Activated T-helper 1 cell treated with anti-CD3 and anti-CD28 coated beads, Interleukin-12 subunit alpha, Interleukin-12 subunit beta, Interleukin-2, Interleukin-4 antibody, amounts not matched to agents 30 ng/mL and 10 ng/mL and 1 ng/mL, durations not matched to agents 14 hours and 24 hours and 36 hours (primary cell): ENCODE measurements at regions of chr1 and their contacts with region 1.

Region 1: GRCh38 chr1:24502709-24503058 is at the start of gene RCAN3:
- DNase-seq: peak; percentile 91
- H3K4me3 Mint-ChIP-seq: peak within 1 kb of the TSS; percentile 97
- H3K27ac Mint-ChIP-seq: peak within 1 kb of the TSS; percentile 94
- H3K4me1 Mint-ChIP-seq: peaks cover 64% of the 10 kb centered on the region
- H3K27me3 Mint-ChIP-seq: no peaks in the 10 kb centered on the region
- total RNA-seq, gene RCAN3: 26.5 and 26.8 TPM in 2 replicates

Region 2: DNA sequence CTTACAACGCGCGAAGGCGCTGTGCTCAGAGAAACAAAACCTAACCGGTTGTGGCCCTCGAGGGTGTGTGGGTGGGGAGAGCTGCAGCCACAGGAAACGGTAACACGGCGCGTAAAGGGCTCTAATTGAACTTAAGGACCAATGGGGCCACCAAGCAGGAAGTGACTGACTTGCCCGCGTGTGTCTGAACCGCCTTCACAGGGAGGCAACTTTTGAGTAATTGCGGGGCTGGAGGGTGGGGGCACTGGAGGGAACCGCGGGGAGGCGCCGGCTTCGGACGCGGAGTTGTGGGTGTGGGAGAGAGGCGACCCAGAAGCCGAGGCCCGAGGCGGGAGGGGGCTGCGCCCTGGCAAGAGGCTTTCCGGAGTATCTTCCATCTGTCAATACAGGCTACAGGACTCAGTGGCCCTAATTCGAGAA is 543.6 kb before region 1 on chr1:
- intact Hi-C with region 1: loop called (anchors 1 kb)
- DNase-seq: peak; percentile 90
- H3K4me3 Mint-ChIP-seq: peak overlapping the region; percentile 99
- H3K27ac Mint-ChIP-seq: peak overlapping the region; percentile 100
- H3K4me1 Mint-ChIP-seq: peaks cover 67% of the 10 kb centered on the region
- H3K27me3 Mint-ChIP-seq: no peaks in the 10 kb centered on the region

Region 3: GRCh38 chr1:24481101-24481500 is 21.6 kb before region 1 on chr1:
- intact Hi-C with region 1: loop called (anchors 1 kb)
- DNase-seq: peak; percentile 44
- H3K4me3 Mint-ChIP-seq: peak overlapping the region; percentile 60
- H3K27ac Mint-ChIP-seq: peak overlapping the region; percentile 96
- H3K4me1 Mint-ChIP-seq: peaks cover 45% of the 10 kb centered on the region
- H3K27me3 Mint-ChIP-seq: no peaks in the 10 kb centered on the region

Region 4: DNA sequence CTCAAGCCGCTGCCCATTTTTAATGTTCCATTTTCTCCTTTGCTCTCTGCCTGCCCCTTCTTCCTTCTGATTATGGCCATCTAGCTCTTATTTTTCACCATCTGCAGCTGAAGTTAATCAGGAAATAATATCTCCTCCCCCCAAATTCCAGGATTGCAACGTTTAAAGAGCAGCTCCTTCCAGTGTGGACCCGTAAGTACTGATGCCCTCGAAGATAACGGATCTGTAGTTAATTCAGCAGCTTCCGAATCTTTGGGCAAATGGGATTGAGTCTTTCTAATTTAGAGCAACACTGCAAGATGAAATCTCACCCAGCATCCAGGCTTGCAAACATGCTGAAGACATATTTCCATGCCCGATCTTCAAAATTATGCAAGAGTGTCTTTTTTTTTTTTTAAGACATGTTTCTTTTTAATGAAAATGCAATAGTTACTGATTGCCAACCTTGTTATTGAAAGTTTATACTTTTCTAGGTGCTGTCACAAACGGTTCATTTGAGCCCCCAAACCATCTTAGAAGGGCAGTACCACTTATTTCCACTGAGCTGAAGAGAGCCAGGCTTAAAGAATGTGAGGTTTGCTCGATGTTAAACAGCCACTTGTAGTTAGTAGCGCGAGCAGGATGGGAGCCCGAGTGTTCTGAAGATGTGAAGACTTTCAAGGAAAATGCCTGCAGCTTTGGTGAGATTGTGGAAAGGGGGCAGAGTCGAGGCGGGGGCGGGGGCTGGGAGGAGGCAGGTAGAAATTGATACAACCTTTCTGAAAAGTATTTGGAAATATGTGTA is 10.9 kb before region 1 on chr1:
- intact Hi-C with region 1: loop called (anchors 1 kb)
- DNase-seq: no peak
- H3K4me3 Mint-ChIP-seq: no peak overlapping the region
- H3K27ac Mint-ChIP-seq: no peak overlapping the region
- H3K4me1 Mint-ChIP-seq: peaks cover 21% of the 10 kb centered on the region
- H3K27me3 Mint-ChIP-seq: peaks cover 1% of the 10 kb centered on the region

Region 5: GRCh38 chr1:24526940-24527542 is 24.4 kb after region 1 on chr1:
- intact Hi-C with region 1: loop called (anchors 1 kb)
- DNase-seq: no peak
- H3K4me3 Mint-ChIP-seq: no peak overlapping the region
- H3K27ac Mint-ChIP-seq: no peak overlapping the region
- H3K4me1 Mint-ChIP-seq: peaks cover 18% of the 10 kb centered on the region
- H3K27me3 Mint-ChIP-seq: no peaks in the 10 kb centered on the region

Region 6: GRCh38 chr1:24536391-24536840 is 33.7 kb after region 1 on chr1:
- intact Hi-C with region 1: loop called (anchors 1 kb)
- DNase-seq: peak; percentile 38
- H3K4me3 Mint-ChIP-seq: peak overlapping the region; percentile 75
- H3K27ac Mint-ChIP-seq: peak overlapping the region; percentile 95
- H3K4me1 Mint-ChIP-seq: peaks cover 67% of the 10 kb centered on the region
- H3K27me3 Mint-ChIP-seq: no peaks in the 10 kb centered on the region

Region 7: GRCh38 chr1:25239681-25240541 is 737.2 kb after region 1 on chr1:
- intact Hi-C with region 1: loop called (anchors 10 kb)
- DNase-seq: peak; percentile 88
- H3K4me3 Mint-ChIP-seq: peak overlapping the region; percentile 83
- H3K27ac Mint-ChIP-seq: peak overlapping the region; percentile 91
- H3K4me1 Mint-ChIP-seq: peaks cover 63% of the 10 kb centered on the region
- H3K27me3 Mint-ChIP-seq: no peaks in the 10 kb centered on the region